KBM-7 (cell line): ENCODE measurements at regions of chr11 and their contacts with region 1.

Region 1: DNA sequence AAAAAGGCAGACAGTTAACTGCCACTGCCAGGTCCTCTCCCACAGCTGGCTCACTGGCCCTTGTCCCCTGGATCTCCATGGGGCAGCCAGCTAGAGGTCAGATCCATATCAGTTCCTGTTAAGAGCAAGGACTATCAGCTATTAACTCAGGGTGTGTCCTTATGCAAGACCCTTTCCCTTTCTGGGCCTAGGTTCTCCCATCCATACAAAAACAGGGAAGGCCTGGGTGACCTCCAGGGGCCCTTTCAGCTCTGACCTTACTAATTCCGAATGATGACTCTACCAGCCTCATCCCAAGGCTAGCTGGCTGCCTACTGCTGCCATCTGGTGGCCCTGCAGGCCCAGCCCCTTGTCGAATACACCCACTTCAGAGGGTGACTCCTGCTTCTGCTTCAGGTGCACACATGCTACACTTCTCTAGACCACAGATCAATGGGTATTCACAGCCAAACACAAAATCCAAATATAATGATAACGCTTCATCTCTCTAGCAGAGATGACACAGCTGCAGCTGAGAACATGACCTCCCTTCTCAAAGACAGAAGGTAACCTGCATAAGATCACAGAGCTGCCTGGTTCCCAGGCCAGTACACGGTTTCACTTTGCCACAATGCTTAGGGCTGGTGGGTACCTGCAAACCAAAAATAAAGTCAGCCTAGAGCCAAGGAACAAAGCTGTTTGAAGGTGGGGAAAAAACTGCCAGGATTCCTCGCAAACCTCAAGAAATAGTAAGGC is 34.1 kb downstream of the SERGEF start:
- DNase-seq: peak; percentile 37

Region 2: GRCh38 chr11:17730608-17731462 is 247.9 kb before region 1 on chr11:
- in situ Hi-C with region 1: loop called (anchors 10 kb)
- DNase-seq: peak; percentile 78